ENCODE measurements at regions of chr11 and their contacts with region 1.

Region 1: GRCh38 chr11:76674517-76675400 is 4.2 kb upstream of the LRRC32 start:
- DNase-seq: no peak
- ATAC-seq: no peak
- H3K4me3 ChIP-seq: no peak overlapping the region
- H3K27ac ChIP-seq: no peak overlapping the region
- H3K4me1 ChIP-seq: peaks cover 3% of the 10 kb centered on the region in 2 donors
- H3K27me3 ChIP-seq: peaks cover 6 to 14% (median 11%) of the 10 kb centered on the region in 3 donors
- CTCF ChIP-seq: no peak
- POLR2A ChIP-seq: no peak

Region 2: DNA sequence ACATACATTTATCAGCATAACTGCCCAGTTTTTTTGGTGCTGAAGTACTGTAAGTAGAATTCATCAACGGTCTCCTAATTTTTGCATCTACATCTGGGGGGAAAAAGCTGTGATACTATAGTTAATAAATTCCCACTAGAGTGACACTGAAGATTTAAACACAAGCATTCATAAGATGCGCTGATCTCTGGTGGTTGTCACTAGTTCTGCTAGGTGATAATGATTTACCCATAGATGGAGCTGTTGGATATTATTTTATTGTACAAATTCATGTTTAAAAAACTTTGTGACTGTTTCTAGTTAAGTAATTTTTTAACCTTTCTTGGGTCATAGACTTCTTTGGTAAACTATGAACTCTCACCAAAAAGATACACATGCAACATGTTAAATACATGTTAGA is 123.4 kb before region 1 on chr11:
- in situ Hi-C with region 1: no loop called
- intact Hi-C with region 1: loop called (anchors 5 kb)
- DNase-seq: no peak
- ATAC-seq: no peak
- H3K4me3 ChIP-seq: no peak overlapping the region
- H3K27ac ChIP-seq: no peak overlapping the region
- H3K4me1 ChIP-seq: no peaks in the 10 kb centered on the region
- H3K27me3 ChIP-seq: no peaks in the 10 kb centered on the region
- CTCF ChIP-seq: peak in 1 of 5 experiments; percentile 20
- POLR2A ChIP-seq: no peak

Region 3: DNA sequence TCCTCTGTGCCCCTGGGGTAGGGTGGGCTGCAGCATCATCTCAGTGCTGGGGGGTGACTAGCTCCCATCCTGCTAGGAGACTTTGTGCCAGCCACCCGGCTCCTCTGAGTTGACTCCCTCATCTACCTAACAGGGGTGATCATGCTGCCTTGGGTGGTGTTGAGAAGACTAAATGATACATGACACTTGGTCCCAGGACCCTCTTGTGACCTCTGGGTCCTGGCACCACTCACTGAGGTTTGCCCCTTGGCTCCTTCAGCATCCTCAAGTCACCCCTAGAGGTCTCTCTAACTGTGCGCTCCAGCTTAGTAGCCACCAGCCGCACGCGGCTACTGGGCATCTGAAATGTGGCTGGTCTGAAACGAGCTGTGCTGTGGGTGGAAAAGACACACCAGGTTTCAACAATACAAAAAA is 76.3 kb before region 1 on chr11:
- in situ Hi-C with region 1: loop called in 1 of 4 experiments (anchors 25 kb)
- intact Hi-C with region 1: loop called (anchors 5 kb)
- DNase-seq: no peak
- ATAC-seq: peak; percentile 18 to 58
- H3K4me3 ChIP-seq: no peak overlapping the region
- H3K27ac ChIP-seq: no peak overlapping the region
- H3K4me1 ChIP-seq: peaks cover 2 to 8% of the 10 kb centered on the region in 2 donors
- H3K27me3 ChIP-seq: no peaks in the 10 kb centered on the region
- CTCF ChIP-seq: peak in 2 of 5 experiments; percentile 48 to 50
- POLR2A ChIP-seq: no peak

Region 4: DNA sequence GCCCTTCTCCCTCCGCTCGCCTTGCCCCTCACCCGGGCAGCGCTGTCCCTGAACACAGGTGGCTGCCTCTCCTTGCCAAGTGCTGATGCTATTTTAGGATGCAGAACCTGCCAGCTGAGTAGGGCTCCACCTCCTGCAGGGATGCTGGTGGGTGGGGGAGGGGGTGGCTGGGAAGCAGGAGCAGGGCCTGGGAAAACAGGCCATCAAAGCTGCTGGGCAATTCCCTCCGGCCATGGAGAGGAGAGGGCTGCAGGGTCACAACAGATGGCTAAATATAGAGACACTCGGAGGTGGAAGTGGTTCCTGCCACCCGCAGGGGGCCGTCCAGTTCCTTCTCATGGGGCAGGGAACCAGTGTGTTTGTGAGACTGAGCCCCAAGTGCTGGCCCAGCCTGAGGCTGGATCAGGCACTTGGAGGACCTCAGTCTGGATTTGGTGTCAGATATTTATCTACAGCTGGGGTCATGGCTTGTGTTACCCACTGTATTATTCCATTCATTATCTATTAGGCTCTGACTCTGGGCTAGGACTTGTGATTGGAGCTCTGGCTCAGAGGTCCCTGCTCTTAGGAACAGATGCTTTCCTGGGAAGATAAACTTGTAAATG is 63.8 kb before region 1 on chr11:
- in situ Hi-C with region 1: no loop called
- intact Hi-C with region 1: no loop called
- DNase-seq: no peak
- ATAC-seq: peak; percentile 23 to 49
- H3K4me3 ChIP-seq: no peak overlapping the region
- H3K27ac ChIP-seq: peak overlapping the region in 3 of 4 donors; percentile 21 to 43 (median 36)
- H3K4me1 ChIP-seq: peaks cover 15 to 36% of the 10 kb centered on the region in 2 donors
- H3K27me3 ChIP-seq: no peaks in the 10 kb centered on the region
- CTCF ChIP-seq: no peak
- POLR2A ChIP-seq: no peak